ENCODE measurements at regions of chr15 and their contacts with region 1.

Region 1: GRCh38 chr15:44468713-44469385 is 41.4 kb downstream of the CTDSPL2 start:
- DNase-seq: peak in 1 of 2 experiments; percentile 42
- H3K4me3 ChIP-seq: no peak overlapping the region
- H3K27ac ChIP-seq: peak overlapping the region; percentile 89
- H3K4me1 ChIP-seq: peaks cover 11% of the 10 kb centered on the region
- H3K27me3 ChIP-seq: no peaks in the 10 kb centered on the region
- CTCF ChIP-seq: no peak

Region 2: DNA sequence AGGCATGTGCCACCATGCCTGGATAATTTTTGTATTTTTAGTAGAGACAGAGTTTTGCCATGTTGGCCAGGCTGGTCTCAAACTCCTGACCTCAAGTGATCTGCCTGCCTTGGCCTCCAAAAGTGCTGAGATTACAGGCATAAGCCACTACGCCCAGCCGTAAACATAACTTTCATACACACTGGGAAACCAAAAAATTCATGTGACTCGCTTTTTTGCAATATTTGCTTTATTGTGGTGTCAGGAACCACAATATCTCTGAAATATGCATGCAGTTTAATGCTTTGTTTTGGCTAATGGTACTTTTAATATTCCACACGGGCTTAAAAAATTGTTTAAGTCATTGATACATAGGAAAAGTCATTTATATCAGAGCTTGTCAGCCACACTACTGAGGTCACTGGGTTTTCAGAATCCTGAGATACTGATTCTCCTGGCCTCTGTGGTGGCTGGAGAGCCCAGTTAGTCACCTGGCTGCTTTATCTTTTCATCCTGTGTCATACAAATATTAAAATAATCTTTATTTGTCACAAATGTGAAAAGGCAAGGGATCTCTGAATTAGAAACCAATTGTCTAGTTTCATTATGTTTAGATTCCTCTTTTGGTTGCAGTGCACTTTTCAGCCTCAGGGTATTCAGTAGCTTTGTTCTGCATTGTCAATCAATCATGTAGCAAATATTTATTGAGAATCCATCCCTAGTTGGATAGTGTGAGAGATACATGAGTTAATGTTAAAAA is 1325.5 kb before region 1 on chr15:
- CTCF ChIA-PET with region 1: no interaction called
- POLR2A ChIA-PET with region 1: no interaction called
- intact Hi-C with region 1: no loop called
- DNase-seq: no peak
- H3K4me3 ChIP-seq: no peak overlapping the region
- H3K27ac ChIP-seq: no peak overlapping the region
- H3K4me1 ChIP-seq: no peaks in the 10 kb centered on the region
- H3K27me3 ChIP-seq: no peaks in the 10 kb centered on the region
- CTCF ChIP-seq: no peak

Region 3: DNA sequence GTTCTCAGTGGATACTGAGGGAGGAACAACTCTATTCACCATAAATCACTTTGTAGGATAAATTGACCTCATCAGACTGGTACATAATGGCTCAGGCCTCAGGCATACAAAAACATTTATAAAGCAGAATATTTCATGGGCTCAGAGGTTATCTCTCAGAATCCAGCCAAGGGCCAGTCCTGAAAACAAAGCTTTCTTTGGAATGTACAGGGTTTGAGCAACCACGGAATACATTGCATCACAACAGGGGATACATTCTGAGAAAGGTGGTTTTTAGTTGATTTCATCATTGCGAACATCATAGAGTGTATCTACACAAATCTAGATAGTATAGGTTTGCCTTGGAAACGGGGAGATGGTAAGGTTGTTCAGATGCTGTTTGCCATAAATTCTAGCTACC is 74.8 kb before region 1 on chr15:
- CTCF ChIA-PET with region 1: no interaction called
- POLR2A ChIA-PET with region 1: no interaction called
- intact Hi-C with region 1: loop called (anchors 10 kb)
- DNase-seq: no peak
- H3K4me3 ChIP-seq: no peak overlapping the region
- H3K27ac ChIP-seq: no peak overlapping the region
- H3K4me1 ChIP-seq: no peaks in the 10 kb centered on the region
- H3K27me3 ChIP-seq: no peaks in the 10 kb centered on the region
- CTCF ChIP-seq: no peak

Region 4: DNA sequence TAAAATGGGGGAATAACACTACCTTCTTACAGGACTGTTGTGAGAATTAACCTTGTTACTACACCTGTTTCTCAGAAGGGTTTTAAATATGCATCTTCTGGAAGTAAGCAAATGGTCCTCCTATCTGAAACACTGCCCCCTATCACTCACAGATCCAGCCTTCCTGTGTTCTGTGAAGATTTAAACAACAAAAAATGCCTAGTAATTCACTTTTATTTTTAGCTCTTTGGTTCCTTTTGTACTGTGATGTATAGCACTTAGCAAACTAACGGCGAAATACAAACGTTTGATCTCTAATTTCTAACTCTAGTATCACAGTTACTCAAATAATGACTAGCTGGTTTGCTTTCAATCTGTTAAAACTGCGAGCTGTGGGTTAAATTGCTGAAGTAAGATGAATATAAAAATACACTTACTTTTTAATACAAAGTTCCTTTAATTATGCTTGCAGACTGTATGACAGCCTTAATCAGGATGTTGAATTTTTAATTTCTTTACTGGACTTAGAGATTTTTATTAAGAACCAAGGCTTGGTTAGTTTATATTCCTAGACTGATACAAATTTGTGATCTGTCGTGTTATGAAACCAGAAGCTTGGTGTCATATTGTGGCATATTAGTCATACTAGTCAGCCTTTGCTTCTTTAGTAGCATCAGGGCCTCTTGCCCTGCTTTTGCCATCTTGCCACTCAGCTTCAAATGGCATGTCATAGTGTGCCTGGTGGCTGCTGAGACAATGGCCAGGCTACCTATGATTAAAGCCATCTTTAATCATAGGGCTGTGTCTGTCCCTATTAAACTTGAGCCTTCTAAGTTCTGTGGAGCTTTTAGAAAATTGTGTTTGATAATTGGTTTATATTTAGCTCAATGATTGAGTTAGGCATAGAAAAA is 77.3 kb after region 1 on chr15:
- CTCF ChIA-PET with region 1: no interaction called
- POLR2A ChIA-PET with region 1: no interaction called
- intact Hi-C with region 1: no loop called
- DNase-seq: no peak
- H3K4me3 ChIP-seq: no peak overlapping the region
- H3K27ac ChIP-seq: peak overlapping the region; percentile 16; the same call in 1 of the 2 replicates
- H3K4me1 ChIP-seq: peaks cover 23% of the 10 kb centered on the region; the same call in 1 of the 2 replicates
- H3K27me3 ChIP-seq: no peaks in the 10 kb centered on the region
- CTCF ChIP-seq: no peak; the same call in 1 of the 2 replicates

Region 5: GRCh38 chr15:44584162-44584749 is 115.4 kb after region 1 on chr15:
- CTCF ChIA-PET with region 1: no interaction called
- POLR2A ChIA-PET with region 1: no interaction called
- intact Hi-C with region 1: no loop called
- DNase-seq: peak; percentile 39 to 54
- H3K4me3 ChIP-seq: no peak overlapping the region
- H3K27ac ChIP-seq: no peak overlapping the region
- H3K4me1 ChIP-seq: peaks cover 11% of the 10 kb centered on the region; the same call in 1 of the 2 replicates
- H3K27me3 ChIP-seq: no peaks in the 10 kb centered on the region
- CTCF ChIP-seq: peak; percentile 51

Measured in PC-9 (cell line).